ENCODE measurements at regions of chr1 and their contacts with region 1.

Region 1: DNA sequence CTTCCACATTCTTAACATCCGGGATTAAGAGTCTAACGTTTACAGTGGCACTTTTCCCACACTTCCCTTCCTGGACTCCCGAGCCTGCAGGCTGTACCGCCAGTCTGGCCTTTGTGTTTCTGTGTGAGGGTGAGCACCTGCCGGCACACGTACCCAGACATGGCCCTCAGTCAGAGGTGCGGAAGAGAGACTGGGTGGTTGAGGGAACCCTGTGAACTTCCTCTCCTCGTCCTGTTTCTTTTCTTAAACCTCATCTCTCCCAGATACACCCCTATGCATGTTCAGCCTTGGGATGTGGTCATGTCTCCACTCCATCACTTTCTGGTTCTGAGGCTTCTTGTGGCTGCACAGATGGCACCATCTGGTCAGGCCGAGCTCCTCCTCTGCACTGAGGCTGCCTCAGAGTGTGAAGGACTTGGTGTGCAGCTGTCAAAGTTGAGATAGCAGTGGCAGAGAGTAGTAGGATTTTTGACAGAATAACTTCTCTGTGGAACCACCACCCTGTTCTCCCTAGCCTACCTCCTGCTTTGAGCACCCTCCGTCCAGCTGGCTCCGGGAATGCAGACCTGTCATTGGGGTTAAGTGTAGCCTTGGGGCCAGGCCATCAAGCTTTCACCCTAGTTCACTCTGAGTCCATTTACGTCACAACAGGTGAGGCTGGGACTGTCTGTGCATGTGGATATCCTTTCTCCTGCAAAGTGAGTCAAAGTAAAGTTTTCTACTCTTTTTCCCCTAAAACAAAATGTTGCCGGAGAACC is 31.4 kb downstream of the VASH2 start:
- ATAC-seq: peak in 2 of 8 experiments; percentile 13 to 18
- H3K4me3 ChIP-seq: no peak overlapping the region
- H3K27ac ChIP-seq: no peak overlapping the region
- H3K4me1 ChIP-seq: peaks cover 0 to 16% of the 10 kb centered on the region in 2 donors

Region 2: GRCh38 chr1:212665241-212666115 is 316.3 kb before region 1 on chr1:
- in situ Hi-C with region 1: loop called in 1 of 9 experiments (anchors 25 kb)
- ATAC-seq: peak; percentile 67 to 93 (median 90)
- H3K4me3 ChIP-seq: peak overlapping the region; percentile 33 to 48 (median 47)
- H3K27ac ChIP-seq: no peak overlapping the region
- H3K4me1 ChIP-seq: peaks cover 13 to 18% of the 10 kb centered on the region in 2 donors

Region 3: GRCh38 chr1:212814537-212815334 is 167.0 kb before region 1 on chr1:
- in situ Hi-C with region 1: loop called in 1 of 9 experiments (anchors 25 kb)
- ATAC-seq: no peak
- H3K4me3 ChIP-seq: no peak overlapping the region
- H3K27ac ChIP-seq: no peak overlapping the region
- H3K4me1 ChIP-seq: peaks cover 5% of the 10 kb centered on the region in 2 donors